Ovary (tissue), 10 donors: ENCODE measurements at regions of chrX and their contacts with region 1.

Region 1: DNA sequence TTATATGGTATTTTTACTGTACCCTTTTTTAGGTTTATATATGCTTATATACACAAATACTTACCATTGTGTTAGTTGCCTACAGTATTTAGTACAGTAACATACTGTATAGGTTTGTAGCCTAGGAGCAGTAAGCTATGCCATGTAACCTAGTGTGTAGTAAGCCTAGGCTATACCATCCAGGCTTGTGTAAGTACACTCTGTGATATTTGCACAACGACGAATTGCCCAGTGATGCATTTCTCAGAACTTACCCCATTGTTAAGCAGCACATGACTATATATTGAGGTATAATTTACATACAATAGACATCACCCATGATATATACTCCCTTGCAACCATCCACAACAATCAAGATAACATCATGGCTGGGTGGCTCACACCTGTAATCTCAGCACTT is 40.1 kb downstream of the STAG2 start:
- DNase-seq: no peak
- H3K4me3 ChIP-seq: no peak overlapping the region
- H3K27ac ChIP-seq: no peak overlapping the region
- H3K4me1 ChIP-seq: no peaks in the 10 kb centered on the region
- H3K27me3 ChIP-seq: no peaks in the 10 kb centered on the region
- CTCF ChIP-seq: no peak
- EP300 ChIP-seq: no peak
- POLR2A ChIP-seq: no peak

Region 2: DNA sequence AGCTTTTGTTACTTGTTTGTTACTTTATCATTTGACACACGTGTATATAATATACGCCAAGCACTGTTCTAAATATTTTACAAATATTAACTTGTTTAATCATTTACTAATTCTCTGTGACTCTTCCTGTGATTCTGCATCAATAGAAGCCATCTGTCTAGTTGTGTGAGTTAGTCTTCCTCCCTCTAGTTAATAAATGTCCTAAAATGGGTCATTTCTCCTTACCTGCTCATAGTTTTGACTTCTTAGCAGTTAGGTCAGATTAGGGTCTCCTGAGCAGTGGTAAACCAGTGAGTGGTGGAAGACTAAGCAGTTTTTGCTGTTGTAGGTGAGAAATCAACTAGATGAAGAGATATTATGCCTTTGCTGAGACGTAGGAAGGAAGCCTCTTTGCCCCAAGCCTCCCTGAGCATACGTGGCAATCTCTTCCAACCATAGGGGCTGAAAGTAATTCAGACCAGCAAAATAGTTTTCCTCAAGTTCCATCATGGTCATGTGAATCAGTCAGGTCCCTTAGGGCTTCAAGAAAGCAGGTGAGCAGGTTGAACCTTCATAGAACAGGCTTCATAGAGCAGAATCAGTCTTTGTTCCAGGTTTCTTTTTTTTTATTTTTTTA is 230.0 kb before region 1 on chrX:
- intact Hi-C with region 1: no loop called
- DNase-seq: no peak
- H3K4me3 ChIP-seq: no peak overlapping the region
- H3K27ac ChIP-seq: no peak overlapping the region
- H3K4me1 ChIP-seq: no peaks in the 10 kb centered on the region
- H3K27me3 ChIP-seq: no peaks in the 10 kb centered on the region
- CTCF ChIP-seq: no peak
- EP300 ChIP-seq: no peak
- POLR2A ChIP-seq: no peak

Region 3: GRCh38 chrX:123859846-123860838 is 141.4 kb before region 1 on chrX and contains the start of gene XIAP:
- intact Hi-C with region 1: no loop called
- DNase-seq: peak; percentile 77 to 84 (median 80)
- H3K4me3 ChIP-seq: peak within 1 kb of the TSS; percentile 72
- H3K27ac ChIP-seq: peak within 1 kb of the TSS; percentile 94 to 98
- H3K4me1 ChIP-seq: no peaks in the 10 kb centered on the region
- H3K27me3 ChIP-seq: no peaks in the 10 kb centered on the region
- CTCF ChIP-seq: no peak
- EP300 ChIP-seq: peak; percentile 52
- POLR2A ChIP-seq: peak; percentile 50
- total RNA-seq, gene XIAP: 20.0 to 56.0 (median 38.8) TPM

Region 4: DNA sequence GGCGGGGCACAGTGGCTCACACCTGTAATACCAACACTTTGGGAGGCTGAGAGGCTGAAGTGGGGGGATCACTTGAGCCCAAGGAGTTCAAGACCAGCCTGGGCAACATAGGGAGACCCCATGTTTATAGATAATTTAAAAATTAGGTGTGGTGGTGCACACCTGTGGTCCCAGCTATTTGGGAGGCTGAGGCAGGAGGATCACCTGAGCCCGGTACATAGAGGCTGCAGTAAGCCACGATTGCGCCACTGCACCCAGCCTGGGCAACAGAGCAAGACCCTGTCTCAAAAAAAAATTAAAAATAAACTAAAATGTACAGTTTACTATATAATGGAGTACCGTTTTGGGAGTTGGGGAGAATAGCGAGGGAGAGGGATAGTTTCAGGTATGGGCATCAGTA is 35.9 kb before region 1 on chrX:
- intact Hi-C with region 1: no loop called
- DNase-seq: no peak
- H3K4me3 ChIP-seq: no peak overlapping the region
- H3K27ac ChIP-seq: no peak overlapping the region
- H3K4me1 ChIP-seq: peaks cover 4% of the 10 kb centered on the region
- H3K27me3 ChIP-seq: no peaks in the 10 kb centered on the region
- CTCF ChIP-seq: no peak
- EP300 ChIP-seq: no peak
- POLR2A ChIP-seq: no peak

Region 5: DNA sequence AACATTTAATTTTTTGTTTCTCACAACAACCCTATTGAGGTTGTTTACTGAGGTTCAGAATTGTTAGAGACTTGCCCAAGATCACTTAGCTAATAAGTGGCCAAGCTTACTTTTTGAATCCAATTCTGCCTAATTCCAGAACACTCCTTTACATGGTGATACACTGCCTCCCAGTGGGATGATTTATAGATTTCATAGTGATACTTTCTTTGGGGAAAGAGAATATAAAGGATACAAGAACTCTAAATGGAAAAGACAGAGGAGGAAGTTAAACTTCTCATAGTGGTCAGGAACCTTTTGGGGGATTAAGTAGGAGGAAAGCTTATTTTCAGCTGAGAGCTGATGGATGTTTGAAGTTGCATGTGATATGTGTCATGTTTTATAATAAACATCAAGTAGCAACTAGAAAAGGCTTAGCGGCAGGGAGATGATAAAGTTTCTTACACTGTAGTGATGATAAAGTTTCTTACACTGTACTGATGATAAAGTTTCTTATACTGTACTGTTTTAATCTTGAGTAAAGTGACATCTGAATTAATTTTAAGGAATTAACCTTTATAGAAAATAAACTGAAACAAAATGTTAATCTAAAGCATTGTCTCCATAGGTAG is 24.8 kb before region 1 on chrX:
- intact Hi-C with region 1: loop called in 1 of 4 experiments (anchors 1 kb)
- DNase-seq: no peak
- H3K4me3 ChIP-seq: no peak overlapping the region
- H3K27ac ChIP-seq: no peak overlapping the region
- H3K4me1 ChIP-seq: peaks cover 1% of the 10 kb centered on the region
- H3K27me3 ChIP-seq: no peaks in the 10 kb centered on the region
- CTCF ChIP-seq: peak in 1 of 3 donors; percentile 16
- EP300 ChIP-seq: no peak
- POLR2A ChIP-seq: no peak